Natural killer cell (primary cell): ENCODE measurements at regions of chr2 and their contacts with region 1.

Region 1: DNA sequence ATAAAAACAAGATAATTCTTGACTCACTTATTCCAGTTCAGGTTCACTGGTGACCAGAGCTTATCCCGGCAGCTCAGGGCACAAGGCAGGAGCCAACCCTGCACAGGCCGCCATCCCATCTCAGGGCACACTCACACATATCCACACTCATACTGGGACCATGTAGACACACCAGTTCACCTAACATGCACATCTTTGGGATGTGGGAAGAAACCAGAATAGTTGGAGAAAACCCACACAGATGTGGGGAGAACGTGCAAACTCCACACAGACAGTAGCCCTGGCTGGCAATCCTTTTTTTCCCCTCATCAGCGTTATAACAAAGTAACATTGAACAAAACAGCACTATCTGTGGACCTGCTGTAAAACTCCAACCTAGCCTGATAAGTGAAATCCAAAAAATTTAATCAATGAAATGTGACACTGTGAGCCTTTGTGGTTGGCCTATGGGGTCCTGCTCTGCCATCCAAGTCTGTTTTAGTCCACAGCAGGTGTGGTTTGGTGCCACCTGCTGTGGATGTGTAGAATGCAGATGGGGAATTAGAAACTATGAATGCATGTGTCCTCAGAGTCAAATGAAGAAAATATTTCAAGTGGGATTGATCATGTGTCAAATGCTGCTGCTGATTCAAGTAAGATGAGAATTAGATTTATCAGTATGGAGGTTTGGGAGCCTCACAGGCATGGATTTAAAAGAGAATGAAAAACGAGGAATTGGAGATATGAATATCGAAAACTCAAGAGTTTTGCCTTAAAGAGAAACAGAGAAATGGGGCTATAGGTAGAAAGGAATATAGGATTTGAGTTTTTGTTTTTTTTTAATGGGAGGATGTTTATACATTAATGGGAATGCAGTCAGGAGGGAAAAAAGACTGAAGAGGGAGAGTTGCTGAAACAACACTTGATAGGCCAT is 47.0 kb downstream of the UGP2 start:
- DNase-seq: peak; percentile 27 to 67
- ATAC-seq: peak; percentile 57 to 89 (median 69)
- H3K4me3 ChIP-seq: no peak overlapping the region
- H3K4me3 Mint-ChIP-seq: no peak overlapping the region
- H3K27ac ChIP-seq: no peak overlapping the region
- H3K27ac Mint-ChIP-seq: peak overlapping the region; percentile 2 to 61
- H3K4me1 ChIP-seq: no peaks in the 10 kb centered on the region
- H3K4me1 Mint-ChIP-seq: peaks cover 7 to 9% of the 10 kb centered on the region in 2 donors
- H3K27me3 ChIP-seq: no peaks in the 10 kb centered on the region
- H3K27me3 Mint-ChIP-seq: no peaks in the 10 kb centered on the region
- CTCF ChIP-seq: peak; percentile 74

Region 2: DNA sequence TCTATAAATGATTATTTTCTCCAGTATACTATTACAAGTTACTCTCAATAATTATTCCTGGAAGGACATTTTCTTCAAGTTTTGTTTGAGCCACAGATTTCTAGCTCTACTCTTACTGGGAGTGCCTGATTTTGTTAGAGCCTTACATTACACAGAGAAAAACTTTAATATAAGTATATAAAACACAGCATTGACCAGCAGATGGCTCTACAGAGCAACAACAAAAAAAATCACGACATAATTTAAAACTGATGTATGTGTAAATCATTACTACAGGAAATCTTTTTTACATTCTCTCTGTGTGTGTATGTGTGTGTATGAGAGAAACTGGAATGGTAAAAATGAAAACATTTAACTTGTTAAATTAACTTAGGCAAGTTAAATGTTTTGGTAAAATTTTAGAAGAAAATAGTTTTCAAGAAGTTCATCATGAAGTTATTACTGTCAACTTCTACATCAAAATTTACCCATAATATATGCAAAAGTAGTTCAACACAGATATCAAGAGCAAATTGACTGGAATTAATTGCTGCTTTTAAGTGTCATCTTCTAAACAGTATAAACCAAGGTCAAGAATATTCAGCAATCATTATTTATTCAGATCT is 196.6 kb before region 1 on chr2:
- intact Hi-C with region 1: loop called (anchors 1 kb)
- DNase-seq: peak in 1 of 2 donors; percentile 70
- ATAC-seq: peak; percentile 44 to 66 (median 63)
- H3K4me3 ChIP-seq: no peak overlapping the region
- H3K4me3 Mint-ChIP-seq: no peak overlapping the region
- H3K27ac ChIP-seq: no peak overlapping the region
- H3K27ac Mint-ChIP-seq: no peak overlapping the region
- H3K4me1 ChIP-seq: no peaks in the 10 kb centered on the region
- H3K4me1 Mint-ChIP-seq: no peaks in the 10 kb centered on the region
- H3K27me3 ChIP-seq: no peaks in the 10 kb centered on the region
- H3K27me3 Mint-ChIP-seq: no peaks in the 10 kb centered on the region
- CTCF ChIP-seq: peak; percentile 77